Psoas muscle (tissue), 8 donors: ENCODE measurements at regions of chr18 and their contacts with region 1.

Region 1: GRCh38 chr18:8794133-8794986 is 89.0 kb downstream of the MTCL1 start:
- DNase-seq: no peak
- ATAC-seq: no peak
- H3K4me3 ChIP-seq: no peak overlapping the region
- H3K27ac ChIP-seq: no peak overlapping the region
- H3K4me1 ChIP-seq: no peaks in the 10 kb centered on the region
- H3K27me3 ChIP-seq: no peaks in the 10 kb centered on the region
- CTCF ChIP-seq: no peak

Region 2: DNA sequence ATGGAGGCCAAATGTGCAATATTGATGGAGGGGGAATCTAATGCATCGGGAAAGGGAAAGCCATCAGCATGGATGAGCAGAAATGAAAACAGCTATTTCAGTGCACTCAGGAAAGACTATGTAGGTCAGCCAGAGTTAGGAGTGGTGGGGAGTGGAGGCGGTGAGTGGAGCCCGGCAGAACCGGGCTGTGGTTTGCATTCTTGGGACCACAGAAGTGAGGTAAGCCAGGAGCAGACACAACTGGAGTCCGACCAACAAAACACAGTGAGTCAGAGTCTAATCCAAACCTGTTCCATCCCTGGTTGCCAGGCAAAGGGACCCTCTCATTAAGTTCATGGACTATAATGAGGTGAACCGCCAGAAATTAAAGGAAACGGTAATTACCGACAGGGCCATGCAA is 246.2 kb before region 1 on chr18:
- intact Hi-C with region 1: no loop called
- DNase-seq: no peak
- ATAC-seq: peak in 1 of 4 donors; percentile 30
- H3K4me3 ChIP-seq: no peak overlapping the region
- H3K27ac ChIP-seq: no peak overlapping the region
- H3K4me1 ChIP-seq: no peaks in the 10 kb centered on the region
- H3K27me3 ChIP-seq: no peaks in the 10 kb centered on the region
- CTCF ChIP-seq: no peak

Region 3: DNA sequence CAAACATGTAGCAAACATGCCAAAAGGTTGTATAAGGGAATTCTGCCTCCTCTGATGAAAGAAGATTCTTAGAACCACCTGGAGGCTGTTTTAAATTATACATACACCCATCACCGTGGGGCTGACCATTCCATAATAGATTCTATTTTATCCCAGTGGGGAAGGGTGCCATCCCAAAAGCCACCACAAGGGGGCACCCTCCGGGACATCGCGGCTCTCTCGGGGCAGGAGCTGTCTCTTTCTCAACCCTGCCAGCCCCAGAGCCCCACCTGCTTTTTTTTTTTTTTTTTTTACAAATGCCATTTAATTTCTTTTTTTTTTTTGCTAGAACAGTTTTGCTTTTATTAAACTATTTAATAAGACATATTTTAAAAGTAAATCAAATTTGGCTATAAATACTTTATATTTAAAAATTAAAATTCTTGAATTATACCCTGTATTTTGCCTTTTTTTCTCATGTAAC is 97.6 kb before region 1 on chr18:
- intact Hi-C with region 1: loop called in 1 of 2 experiments (anchors 10 kb)
- DNase-seq: peak; percentile 82 to 87
- ATAC-seq: peak; percentile 94 to 99 (median 96)
- H3K4me3 ChIP-seq: no peak overlapping the region
- H3K27ac ChIP-seq: no peak overlapping the region
- H3K4me1 ChIP-seq: no peaks in the 10 kb centered on the region
- H3K27me3 ChIP-seq: no peaks in the 10 kb centered on the region
- CTCF ChIP-seq: peak; percentile 94

Region 4: DNA sequence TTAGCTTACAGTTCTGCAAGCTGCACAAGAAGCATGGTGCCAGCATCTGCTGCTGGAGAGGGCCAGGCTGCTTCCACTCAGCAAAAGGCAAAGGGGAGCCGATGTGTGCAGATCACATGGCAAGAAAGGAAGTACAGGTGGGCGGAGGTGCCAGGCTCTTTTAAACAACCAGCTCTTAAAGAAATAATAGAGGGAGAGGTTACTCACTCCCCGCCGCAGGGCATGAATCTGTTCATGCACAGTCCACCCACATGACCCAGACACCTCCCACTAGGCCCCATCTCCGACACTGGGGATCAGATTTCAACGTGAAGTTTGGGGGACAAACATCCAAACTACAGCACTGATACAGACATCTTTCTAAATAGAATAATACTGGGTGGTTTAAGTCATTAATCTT is 16.8 kb after region 1 on chr18:
- intact Hi-C with region 1: loop called in 1 of 2 experiments (anchors 2 kb)
- DNase-seq: no peak
- ATAC-seq: no peak
- H3K4me3 ChIP-seq: no peak overlapping the region
- H3K27ac ChIP-seq: no peak overlapping the region
- H3K4me1 ChIP-seq: no peaks in the 10 kb centered on the region
- H3K27me3 ChIP-seq: no peaks in the 10 kb centered on the region
- CTCF ChIP-seq: no peak

Region 5: GRCh38 chr18:8835521-8835953 is 41.2 kb after region 1 on chr18:
- intact Hi-C with region 1: no loop called
- DNase-seq: peak; percentile 35 to 63
- ATAC-seq: peak; percentile 96 to 98 (median 96)
- H3K4me3 ChIP-seq: no peak overlapping the region
- H3K27ac ChIP-seq: peak overlapping the region; percentile 60
- H3K4me1 ChIP-seq: peaks cover 9% of the 10 kb centered on the region
- H3K27me3 ChIP-seq: no peaks in the 10 kb centered on the region
- CTCF ChIP-seq: no peak